Activated CD4-positive, alpha-beta T cell treated with anti-CD3 and anti-CD28 coated beads for 36 hours (primary cell): ENCODE measurements at regions of chr22 and their contacts with region 1.

Region 1: GRCh38 chr22:36123673-36124630 is 36.6 kb downstream of the APOL3 start:
- DNase-seq: peak; percentile 97
- ATAC-seq: peak; percentile 99
- H3K4me3 Mint-ChIP-seq: peak overlapping the region; percentile 62
- H3K27ac Mint-ChIP-seq: peak overlapping the region; percentile 83
- H3K4me1 Mint-ChIP-seq: peaks cover 10% of the 10 kb centered on the region
- H3K27me3 Mint-ChIP-seq: no peaks in the 10 kb centered on the region

Region 2: GRCh38 chr22:35430897-35431322 is 693.0 kb before region 1 on chr22:
- CTCF ChIA-PET with region 1: no interaction called
- POLR2A ChIA-PET with region 1: no interaction called
- intact Hi-C with region 1: loop called in 1 of 2 experiments (anchors 10 kb)
- DNase-seq: peak; percentile 81
- ATAC-seq: peak; percentile 76
- H3K4me3 Mint-ChIP-seq: no peak overlapping the region
- H3K27ac Mint-ChIP-seq: no peak overlapping the region
- H3K4me1 Mint-ChIP-seq: no peaks in the 10 kb centered on the region
- H3K27me3 Mint-ChIP-seq: no peaks in the 10 kb centered on the region

Region 3: DNA sequence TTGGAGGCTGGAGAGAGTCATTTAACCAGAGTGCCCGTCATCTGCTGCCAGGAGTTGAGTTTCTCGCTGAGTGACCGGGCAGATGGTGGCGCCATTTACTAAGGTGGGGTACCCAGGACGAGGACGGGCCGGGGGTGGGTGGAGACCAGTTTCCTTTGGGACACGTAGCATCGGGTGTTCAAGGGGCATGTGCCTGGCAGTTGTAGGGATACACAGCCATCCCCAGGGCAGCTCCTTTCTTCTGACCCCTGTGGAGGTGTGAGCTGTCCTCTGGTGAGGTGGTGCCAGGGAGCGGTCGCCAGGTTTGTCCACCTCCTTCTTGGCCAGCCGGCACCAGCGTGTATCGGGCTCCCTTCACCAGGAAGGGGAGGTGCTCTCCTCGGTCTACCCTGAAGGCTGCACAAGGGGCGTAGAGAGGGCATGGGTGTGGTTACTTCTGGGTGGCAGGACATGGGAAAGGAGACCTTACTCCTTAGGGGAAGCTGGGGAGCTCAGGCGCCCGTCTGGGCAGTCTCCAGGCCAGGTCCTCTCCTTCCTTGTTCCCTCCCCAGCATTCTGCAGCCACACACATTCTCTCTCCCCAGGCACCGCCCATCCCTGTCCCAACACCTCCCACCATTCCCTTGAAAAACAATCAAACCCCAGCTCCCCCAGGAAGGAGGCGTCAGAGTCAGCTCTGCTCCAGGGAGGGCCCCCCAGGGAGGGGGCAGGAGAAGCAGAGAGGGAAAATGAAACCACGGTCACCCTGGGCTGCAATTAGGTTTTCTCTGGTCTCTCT is 496.5 kb before region 1 on chr22:
- CTCF ChIA-PET with region 1: no interaction called
- POLR2A ChIA-PET with region 1: no interaction called
- intact Hi-C with region 1: loop called (anchors 1 kb)
- DNase-seq: peak; percentile 83
- ATAC-seq: peak; percentile 72
- H3K4me3 Mint-ChIP-seq: peak overlapping the region; percentile 68
- H3K27ac Mint-ChIP-seq: peak overlapping the region; percentile 33
- H3K4me1 Mint-ChIP-seq: peaks cover 26% of the 10 kb centered on the region
- H3K27me3 Mint-ChIP-seq: no peaks in the 10 kb centered on the region

Region 4: DNA sequence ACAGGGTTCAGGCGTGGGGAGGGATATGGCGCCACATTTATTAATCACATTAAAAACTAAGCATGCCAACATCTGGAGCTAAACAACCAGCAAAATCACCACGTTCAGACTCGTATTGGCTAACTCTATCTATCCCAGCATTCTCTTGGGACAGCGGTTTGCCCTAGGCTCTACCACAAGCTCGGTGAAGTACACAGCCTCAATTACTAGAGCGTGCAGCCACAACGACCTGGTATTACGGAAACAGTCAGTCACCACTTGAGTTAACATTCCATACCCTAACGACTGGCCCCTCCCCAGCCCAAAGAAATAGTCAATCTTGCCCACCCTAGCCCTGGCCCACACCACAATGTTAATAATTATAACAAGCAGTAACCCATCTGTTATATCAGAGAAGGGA is 374.1 kb before region 1 on chr22:
- CTCF ChIA-PET with region 1: no interaction called
- POLR2A ChIA-PET with region 1: no interaction called
- intact Hi-C with region 1: loop called in 1 of 2 experiments (anchors 10 kb)
- DNase-seq: no peak
- ATAC-seq: no peak
- H3K4me3 Mint-ChIP-seq: no peak overlapping the region
- H3K27ac Mint-ChIP-seq: no peak overlapping the region
- H3K4me1 Mint-ChIP-seq: no peaks in the 10 kb centered on the region
- H3K27me3 Mint-ChIP-seq: no peaks in the 10 kb centered on the region

Region 5: DNA sequence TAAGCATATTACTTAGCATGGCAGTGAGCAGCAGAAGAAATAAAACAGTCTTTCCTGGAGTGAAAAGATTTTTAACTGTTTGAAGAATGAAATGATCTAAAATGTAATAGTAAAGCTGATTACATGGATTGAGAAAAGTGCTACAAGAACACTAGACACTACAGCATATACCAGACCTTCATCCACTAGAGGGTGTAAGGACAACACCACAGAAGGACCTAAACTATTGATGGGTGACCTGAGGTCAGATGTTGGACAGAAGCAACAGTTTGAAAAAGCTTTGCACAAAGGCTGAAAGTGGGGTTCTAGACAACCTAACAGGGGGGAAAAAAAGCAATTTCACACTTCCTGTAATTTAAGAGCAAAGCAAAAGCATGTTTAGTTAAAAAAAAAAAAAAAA is 193.0 kb before region 1 on chr22:
- CTCF ChIA-PET with region 1: interaction called, 3 read pairs
- POLR2A ChIA-PET with region 1: no interaction called
- intact Hi-C with region 1: loop called (anchors 1 kb)
- DNase-seq: no peak
- ATAC-seq: no peak
- H3K4me3 Mint-ChIP-seq: no peak overlapping the region
- H3K27ac Mint-ChIP-seq: no peak overlapping the region
- H3K4me1 Mint-ChIP-seq: no peaks in the 10 kb centered on the region
- H3K27me3 Mint-ChIP-seq: peaks cover 2% of the 10 kb centered on the region

Region 6: GRCh38 chr22:36028646-36029405 is 95.1 kb before region 1 on chr22 and contains the start of gene RBFOX2:
- CTCF ChIA-PET with region 1: interaction called, 6 read pairs
- POLR2A ChIA-PET with region 1: no interaction called
- intact Hi-C with region 1: loop called in 1 of 2 experiments (anchors 1 kb)
- DNase-seq: peak; percentile 87
- ATAC-seq: peak; percentile 83
- H3K4me3 Mint-ChIP-seq: peak within 1 kb of the TSS; percentile 80
- H3K27ac Mint-ChIP-seq: peak within 1 kb of the TSS; percentile 72
- H3K4me1 Mint-ChIP-seq: peaks cover 20% of the 10 kb centered on the region
- H3K27me3 Mint-ChIP-seq: peaks cover 2% of the 10 kb centered on the region
- total RNA-seq, gene RBFOX2: 6.9 to 7.7 TPM

Region 7: DNA sequence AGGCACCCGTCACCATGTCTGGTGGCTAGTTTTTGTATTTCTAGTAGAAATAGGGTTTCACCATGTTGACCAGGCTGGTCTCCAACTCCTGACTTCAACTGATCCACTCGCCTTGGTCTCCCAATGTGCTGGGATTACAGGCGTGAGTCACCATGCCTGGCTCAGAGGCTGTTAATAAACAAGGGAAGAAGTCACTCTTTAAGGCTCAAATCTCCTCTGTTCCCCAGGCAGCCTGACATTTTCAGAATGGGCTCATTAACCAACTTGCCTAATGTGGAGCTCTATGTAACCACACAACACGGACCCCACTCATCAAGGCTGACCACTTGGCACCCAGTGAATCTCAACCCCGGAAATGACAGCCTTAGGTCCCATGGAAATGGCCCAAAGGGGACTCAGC is 12.5 kb after region 1 on chr22:
- CTCF ChIA-PET with region 1: interaction called, 12 read pairs
- POLR2A ChIA-PET with region 1: no interaction called
- intact Hi-C with region 1: no loop called
- DNase-seq: no peak
- ATAC-seq: no peak
- H3K4me3 Mint-ChIP-seq: no peak overlapping the region
- H3K27ac Mint-ChIP-seq: no peak overlapping the region
- H3K4me1 Mint-ChIP-seq: peaks cover 17% of the 10 kb centered on the region
- H3K27me3 Mint-ChIP-seq: no peaks in the 10 kb centered on the region